Dendritic cell treated with granulocyte-macrophage colony-stimulating factor and Interleukin-4, amounts not matched to agents 40 ng/mL and 50 ng/mL, for 4 days (primary cell): ENCODE measurements at regions of chr22 and their contacts with region 1.

Region 1: DNA sequence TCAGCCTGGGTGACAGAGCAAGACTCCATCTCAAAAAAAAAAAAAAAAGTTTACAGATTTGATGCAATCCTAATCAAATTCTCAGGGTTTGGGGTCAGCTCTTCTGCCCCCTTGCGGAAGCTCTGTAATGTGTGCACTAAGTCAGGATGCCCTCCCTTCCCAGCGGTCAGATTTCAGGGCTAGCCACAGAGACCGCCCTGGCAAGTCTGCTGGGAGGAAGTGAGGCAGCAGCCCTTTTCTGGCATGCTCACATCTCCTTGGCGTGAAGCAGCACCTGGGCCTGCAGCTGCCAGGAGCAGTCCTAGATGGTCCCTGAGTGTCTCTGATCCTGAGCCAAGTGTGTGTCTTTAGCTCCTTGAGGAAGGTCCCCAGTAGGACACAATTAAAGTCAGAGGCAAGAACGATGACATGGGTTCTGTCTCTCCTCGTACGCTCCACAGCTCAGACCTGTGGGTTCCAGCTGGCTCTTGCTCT is 10.9 kb upstream of the APOBEC3C start:
- H3K4me3 Mint-ChIP-seq: no peak overlapping the region
- H3K27ac Mint-ChIP-seq: no peak overlapping the region
- H3K4me1 Mint-ChIP-seq: peaks cover 15% of the 10 kb centered on the region
- H3K27me3 Mint-ChIP-seq: peaks cover 31% of the 10 kb centered on the region

Region 2: GRCh38 chr22:38766076-38766777 is 237.0 kb before region 1 on chr22:
- intact Hi-C with region 1: loop called (anchors 10 kb)
- H3K4me3 Mint-ChIP-seq: no peak overlapping the region
- H3K27ac Mint-ChIP-seq: no peak overlapping the region
- H3K4me1 Mint-ChIP-seq: peaks cover 6% of the 10 kb centered on the region
- H3K27me3 Mint-ChIP-seq: peaks cover 13% of the 10 kb centered on the region

Region 3: DNA sequence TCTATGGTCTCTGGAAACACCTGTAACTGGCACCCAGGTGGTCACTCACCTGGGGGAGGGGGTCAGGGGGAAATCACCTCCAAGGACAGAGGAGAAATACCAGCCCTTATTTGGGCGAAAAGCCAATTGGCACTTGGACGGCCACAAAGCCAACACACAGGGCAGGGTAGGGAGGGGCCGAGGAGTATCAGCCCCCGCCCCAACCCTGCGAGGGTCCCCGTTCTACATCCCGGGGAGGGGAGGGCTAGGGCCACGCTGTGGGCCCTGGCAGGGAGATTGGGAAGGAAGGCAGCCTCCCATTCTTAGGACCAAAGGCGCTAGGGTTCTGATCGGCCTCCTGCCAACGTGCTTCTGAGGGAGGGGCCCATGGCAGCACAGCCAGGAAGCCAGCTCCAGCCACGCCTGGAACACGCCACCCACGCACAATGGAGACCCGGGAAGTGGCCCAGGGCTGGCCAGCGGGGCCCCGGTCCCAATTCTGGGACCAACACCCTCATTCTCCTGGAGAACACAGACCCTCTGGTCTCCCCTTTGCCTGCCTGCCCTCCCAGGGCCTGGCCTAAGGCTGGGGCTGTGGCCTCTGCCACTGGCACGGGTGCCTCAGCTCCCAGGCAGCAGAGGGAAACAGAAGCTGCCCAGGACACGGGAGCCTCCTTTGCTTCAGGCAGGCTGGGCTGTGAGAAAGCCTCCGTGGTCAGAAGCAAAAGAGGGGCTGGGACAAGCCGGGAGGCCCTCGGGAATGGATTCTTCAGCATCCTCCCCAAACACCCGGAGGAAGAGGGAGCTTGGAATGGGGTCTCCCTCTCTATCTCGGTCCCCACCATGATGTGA is 138.6 kb before region 1 on chr22:
- intact Hi-C with region 1: no loop called
- H3K4me3 Mint-ChIP-seq: no peak overlapping the region
- H3K27ac Mint-ChIP-seq: no peak overlapping the region
- H3K4me1 Mint-ChIP-seq: peaks cover 78% of the 10 kb centered on the region
- H3K27me3 Mint-ChIP-seq: peaks cover 5% of the 10 kb centered on the region

Region 4: GRCh38 chr22:38927033-38927781 is 76.0 kb before region 1 on chr22:
- intact Hi-C with region 1: loop called (anchors 2 kb)
- H3K4me3 Mint-ChIP-seq: peak overlapping the region; percentile 47
- H3K27ac Mint-ChIP-seq: peak overlapping the region; percentile 5
- H3K4me1 Mint-ChIP-seq: peaks cover 12% of the 10 kb centered on the region
- H3K27me3 Mint-ChIP-seq: peaks cover 64% of the 10 kb centered on the region

Region 5: DNA sequence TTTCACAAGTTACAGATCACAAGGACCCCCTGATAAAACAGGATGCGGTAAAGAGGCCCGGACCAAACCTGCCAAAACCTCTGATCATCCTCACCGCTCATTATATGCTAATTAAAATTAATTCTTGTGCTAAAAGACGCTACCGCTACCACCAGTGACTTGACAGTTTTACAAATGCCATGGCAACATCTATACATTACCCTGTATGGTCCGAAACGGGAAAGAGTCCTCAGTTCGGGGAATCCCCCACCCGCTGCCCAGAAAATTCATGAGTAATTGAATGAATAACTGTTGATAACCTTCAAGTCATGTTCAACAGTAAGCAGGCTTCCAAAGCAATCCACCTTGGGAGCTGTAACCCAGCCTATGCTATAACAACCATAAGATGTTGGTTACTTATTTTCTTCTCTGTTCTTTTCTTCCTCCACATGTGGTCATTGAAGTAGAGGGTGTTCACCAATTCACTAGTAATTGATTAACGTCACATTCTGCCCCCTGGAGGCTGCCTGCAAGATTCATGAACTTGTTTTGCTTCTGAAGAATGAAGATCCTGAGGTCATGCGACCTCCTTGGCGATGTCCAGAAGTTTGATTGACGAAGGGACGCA is 114.5 kb after region 1 on chr22:
- intact Hi-C with region 1: loop called (anchors 5 kb)
- H3K4me3 Mint-ChIP-seq: no peak overlapping the region
- H3K27ac Mint-ChIP-seq: peak overlapping the region; percentile 52
- H3K4me1 Mint-ChIP-seq: peaks cover 29% of the 10 kb centered on the region
- H3K27me3 Mint-ChIP-seq: peaks cover 20% of the 10 kb centered on the region